Left colon (tissue), 2 donors: ENCODE measurements at regions of chr14 and their contacts with region 1.

Region 1: GRCh38 chr14:24806061-24806678 is 172.2 kb upstream of the GZMB start:
- DNase-seq: peak; percentile 73 to 91
- ATAC-seq: peak; percentile 92

Region 2: GRCh38 chr14:25014440-25014839 is 208.3 kb after region 1 on chr14:
- intact Hi-C with region 1: no loop called
- DNase-seq: no peak
- ATAC-seq: peak; percentile 63

Region 3: DNA sequence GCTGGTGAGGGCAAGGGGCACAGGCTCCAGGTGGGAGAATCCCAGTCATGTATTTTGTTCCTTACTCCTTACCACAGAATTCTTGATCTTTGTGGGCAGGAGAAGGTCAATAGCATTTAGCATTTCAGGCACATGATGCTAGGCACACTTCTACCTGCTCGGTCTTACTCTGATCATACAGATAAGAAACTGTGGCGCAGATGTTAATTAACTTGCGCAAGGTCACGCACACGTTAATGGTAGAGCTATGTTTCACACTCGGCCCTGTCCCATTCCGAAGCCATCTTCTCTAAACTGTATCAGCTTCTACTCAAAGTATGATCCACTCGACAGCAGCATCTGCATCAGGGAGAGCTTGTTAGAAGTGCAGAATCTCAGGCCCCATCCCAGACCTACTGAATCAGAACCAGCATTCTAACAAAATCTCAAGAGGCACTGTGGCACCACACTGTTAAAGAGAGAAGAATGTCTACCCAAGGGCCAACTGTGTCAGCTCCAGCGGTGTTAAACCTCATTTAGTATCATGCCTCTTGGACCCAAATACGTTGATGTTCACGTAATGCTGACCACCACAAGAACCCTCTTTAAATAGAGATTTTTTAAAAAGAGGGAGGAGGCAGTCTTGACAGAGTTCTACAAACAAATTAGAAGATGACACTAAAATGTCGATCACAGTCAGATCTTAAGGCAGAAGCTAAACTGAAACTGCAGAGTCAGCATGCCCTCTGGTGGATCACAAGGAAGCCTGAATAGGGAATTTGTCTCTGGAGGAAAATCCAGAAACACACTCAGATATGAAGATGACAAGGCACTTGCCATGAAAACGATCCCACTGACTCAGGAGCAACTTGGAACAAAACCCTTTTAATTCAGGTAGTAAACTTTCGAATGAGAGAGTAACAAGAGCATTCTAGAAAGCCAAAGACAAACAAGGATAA is 236.5 kb after region 1 on chr14:
- intact Hi-C with region 1: loop called in 1 of 2 experiments (anchors 5 kb)
- DNase-seq: peak in 1 of 2 donors; percentile 59
- ATAC-seq: peak; percentile 65

Region 4: DNA sequence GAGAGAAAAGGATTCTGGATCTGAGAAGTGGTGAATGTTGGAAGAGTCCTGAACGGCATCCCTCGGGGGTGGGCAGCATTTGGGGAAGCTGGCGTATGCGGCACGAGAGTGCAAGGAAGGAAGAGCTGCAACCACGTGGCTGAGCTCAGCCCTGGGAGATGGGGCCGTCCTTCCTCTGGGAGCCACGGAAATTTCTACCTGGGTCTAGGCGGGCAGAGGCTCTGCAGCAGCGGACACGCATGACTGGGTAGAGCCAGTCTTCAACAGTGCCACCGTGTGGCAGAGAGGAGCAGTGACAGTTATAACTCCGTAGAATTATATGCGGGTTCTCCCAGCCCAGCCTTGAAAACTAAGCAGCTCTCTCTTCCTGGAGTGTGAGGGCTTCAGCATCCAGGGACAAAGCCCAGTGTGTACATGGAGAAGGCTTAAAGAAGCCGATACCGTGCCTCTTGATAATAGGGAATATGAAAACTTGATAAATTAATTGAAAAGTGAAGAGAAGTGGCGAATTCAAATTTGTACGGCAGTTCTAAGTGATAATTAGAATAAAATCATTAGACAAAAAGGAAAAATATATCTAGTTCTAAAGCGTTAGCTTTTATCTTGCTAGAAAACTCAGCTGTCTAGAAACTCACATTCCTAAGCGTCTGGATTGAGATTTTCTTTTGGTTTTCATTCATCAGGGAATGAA is 326.7 kb after region 1 on chr14:
- intact Hi-C with region 1: loop called in 1 of 2 experiments (anchors 10 kb)
- DNase-seq: peak; percentile 70 to 73
- ATAC-seq: peak; percentile 99

Region 5: DNA sequence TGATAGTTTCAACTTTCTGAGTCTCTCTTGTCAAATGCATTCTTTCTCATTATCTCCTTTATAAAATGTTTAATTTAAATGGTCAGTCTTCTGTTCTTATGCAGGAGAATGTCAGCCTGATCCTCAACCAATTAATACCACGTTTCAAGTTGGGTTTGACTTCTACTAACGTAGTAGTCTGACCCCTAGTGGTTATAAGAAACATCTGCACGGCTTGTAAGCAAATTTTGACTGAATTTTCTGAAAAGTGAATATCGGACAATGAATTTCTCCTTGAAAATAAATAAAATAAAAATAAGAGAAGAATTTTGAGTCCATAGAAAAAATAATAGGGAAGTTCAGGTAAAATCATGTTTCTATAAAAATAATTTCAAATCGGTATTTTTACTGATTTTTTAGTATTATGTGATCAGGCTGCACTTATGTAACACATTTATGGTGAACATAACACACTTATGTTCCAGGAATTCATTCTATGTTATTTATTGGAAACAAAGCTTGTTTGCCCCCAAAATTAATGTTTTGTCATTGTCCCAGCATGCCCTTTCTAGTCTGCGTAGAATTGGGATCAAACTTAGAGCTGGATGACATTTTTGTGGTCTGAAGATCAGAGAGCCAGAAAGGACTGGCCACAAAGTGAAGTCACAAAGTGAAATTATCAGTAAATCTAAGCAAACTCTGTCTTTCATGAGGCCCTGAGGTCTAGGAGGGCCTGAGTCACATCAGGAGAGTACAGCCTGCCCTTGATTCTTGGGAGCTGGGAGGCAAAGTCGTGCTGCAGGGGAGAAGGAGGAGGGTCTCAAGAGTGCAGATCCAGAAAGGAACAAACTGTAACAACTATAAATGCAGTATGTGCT is 345.0 kb after region 1 on chr14:
- intact Hi-C with region 1: loop called in 1 of 2 experiments (anchors 5 kb)
- DNase-seq: no peak
- ATAC-seq: peak; percentile 54